Mammary epithelial cell (primary cell): ENCODE measurements at regions of chr19 and their contacts with region 1.

Region 1: DNA sequence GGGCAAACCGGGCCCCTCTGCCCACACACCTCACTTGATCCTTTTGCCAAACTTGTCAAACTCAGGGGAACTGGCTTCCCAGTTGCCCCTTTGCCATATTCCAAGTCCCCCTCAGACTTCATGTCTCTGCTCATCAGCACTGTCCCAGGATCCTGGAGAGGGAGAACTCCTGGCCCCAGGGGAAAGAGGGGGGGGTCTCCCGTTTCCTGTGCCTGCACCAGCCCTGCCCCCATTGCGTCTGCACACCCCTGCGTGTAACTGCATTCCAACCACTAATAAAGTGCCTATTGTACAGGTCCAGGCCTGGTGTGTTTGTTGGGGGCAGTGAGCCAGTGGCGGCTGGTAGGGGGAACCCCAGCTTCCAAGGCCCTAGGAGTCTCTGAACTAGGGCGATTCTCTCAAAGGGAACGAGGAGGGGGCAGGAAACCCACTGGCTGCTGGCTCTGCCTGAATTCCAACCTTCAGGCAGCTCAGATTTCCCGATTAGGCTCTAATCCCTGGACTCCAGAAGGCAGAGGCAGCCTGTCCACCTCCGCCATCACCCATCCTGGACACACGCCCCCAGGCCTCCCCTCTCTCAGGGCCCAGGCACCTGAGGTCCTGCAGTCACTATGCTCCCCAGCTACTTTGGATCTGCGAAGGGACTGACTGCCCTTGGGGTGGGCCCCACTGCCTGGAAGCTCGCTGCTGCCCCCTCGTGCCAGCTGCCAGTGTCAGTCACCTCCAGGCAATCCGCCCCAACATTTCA is 9.7 kb upstream of the ILF3 start:
- DNase-seq: peak; percentile 59
- H3K4me3 ChIP-seq: no peak overlapping the region
- H3K27ac ChIP-seq: no peak overlapping the region
- H3K4me1 ChIP-seq: peaks cover 14% of the 10 kb centered on the region
- H3K27me3 ChIP-seq: no peaks in the 10 kb centered on the region
- CTCF ChIP-seq: peak; percentile 81 to 91

Region 2: DNA sequence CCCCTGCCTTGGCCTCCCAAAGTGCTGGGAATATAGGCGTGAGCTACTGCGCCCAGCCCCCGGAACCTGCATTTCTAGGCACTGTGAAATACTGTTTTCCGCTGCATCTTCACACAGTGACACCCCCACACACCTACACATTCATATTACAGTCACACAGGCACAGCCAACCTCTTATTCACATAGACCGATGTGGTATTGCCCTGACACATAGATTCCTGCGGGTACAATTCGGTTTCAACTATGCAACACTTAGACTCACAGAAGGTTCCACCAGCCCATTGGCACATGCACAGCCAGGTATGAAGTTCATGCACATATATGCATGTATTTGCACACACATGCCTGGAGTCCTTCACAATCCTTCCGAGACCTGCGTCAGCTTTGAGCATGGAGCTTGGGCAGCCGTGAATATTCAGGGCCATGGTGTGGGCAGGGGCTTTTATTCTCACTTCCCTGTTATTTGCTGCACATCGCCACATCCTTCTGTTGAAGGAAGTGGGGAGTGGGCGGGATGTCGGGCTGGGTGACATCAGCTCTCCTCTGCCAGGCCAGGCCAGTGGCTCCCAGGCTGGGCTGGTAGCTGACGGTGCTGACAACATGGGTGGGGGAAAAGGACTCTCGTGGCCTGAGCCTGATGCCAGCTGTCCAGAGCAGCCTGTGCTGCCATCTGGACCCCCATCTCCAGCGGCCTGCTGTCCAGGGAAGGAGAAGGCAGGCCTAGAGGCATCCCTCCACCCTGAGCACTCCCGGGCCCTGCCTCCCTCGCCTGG is 235.7 kb before region 1 on chr19:
- CTCF ChIA-PET with region 1: interaction called, 27 read pairs
- dilution Hi-C with region 1: no loop called
- in situ Hi-C with region 1: no loop called
- intact Hi-C with region 1: no loop called
- DNase-seq: no peak
- H3K4me3 ChIP-seq: no peak overlapping the region
- H3K27ac ChIP-seq: no peak overlapping the region
- H3K4me1 ChIP-seq: peaks cover 13% of the 10 kb centered on the region
- H3K27me3 ChIP-seq: peaks cover 5% of the 10 kb centered on the region
- CTCF ChIP-seq: no peak

Region 3: DNA sequence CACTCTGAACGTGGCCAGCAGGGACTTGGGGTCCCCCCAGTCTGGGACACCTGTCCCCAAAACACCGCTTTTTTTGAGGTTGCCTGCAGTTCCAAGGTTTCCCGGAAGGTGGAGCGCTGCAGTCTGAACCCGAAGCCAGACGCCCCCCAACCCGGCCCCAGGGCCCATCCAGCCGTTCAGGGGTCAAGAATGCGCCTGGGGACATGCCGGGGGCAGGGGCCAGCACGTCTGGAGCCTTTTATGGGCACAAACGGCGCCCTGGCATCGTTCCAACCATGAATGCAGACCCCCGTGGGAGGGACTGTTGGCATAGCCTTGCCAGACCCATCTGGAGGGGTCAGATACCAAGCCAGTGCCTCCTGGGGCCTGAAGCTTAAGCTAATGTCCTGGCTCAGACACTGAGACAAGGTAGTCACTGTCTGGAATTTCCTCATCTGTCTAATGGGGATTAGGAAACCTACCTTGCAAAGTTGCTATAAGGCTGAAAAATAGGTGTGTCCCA is 134.1 kb before region 1 on chr19:
- CTCF ChIA-PET with region 1: no interaction called
- dilution Hi-C with region 1: loop called (anchors 5 kb)
- in situ Hi-C with region 1: no loop called
- intact Hi-C with region 1: no loop called
- DNase-seq: peak; percentile 72
- H3K4me3 ChIP-seq: no peak overlapping the region
- H3K27ac ChIP-seq: no peak overlapping the region
- H3K4me1 ChIP-seq: peaks cover 14% of the 10 kb centered on the region
- H3K27me3 ChIP-seq: no peaks in the 10 kb centered on the region
- CTCF ChIP-seq: peak; percentile 46 to 73

Region 4: DNA sequence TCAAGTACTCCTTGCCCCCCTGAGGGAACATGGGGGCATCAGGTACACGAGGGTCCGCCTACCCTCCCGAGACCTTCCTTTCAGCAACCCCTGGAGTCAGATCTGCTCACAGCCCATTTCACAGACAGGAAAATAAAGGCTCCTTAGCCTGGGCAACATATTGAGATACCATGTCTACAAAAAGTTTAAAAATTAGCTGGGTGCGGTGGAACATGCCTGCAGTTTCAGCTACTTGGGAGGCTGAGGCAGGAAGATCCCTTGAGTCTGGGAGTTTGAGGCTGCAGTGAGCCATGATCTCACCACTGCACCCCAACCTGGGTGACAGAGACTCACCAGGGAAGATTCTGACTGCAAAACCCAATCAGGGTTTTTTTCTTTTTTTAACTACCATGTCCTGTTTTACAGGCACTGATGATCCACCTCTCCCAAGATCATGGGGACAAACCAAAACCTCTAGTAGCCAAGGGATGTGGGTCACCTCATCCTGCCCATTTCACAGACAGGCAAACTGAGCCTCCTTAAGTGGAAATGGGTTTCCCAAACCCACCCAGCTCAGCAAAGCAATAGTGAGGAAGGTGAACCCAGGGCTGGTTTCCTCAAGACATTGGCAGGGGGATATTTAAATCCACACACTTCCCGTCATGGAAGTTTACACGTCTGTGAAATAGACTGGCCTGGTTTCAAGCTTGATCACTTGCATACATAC is 69.3 kb before region 1 on chr19:
- CTCF ChIA-PET with region 1: interaction called, 16 read pairs
- dilution Hi-C with region 1: loop called (anchors 5 kb)
- in situ Hi-C with region 1: loop called (anchors 5 kb)
- intact Hi-C with region 1: no loop called
- DNase-seq: no peak
- H3K4me3 ChIP-seq: no peak overlapping the region
- H3K27ac ChIP-seq: no peak overlapping the region
- H3K4me1 ChIP-seq: no peaks in the 10 kb centered on the region
- H3K27me3 ChIP-seq: no peaks in the 10 kb centered on the region
- CTCF ChIP-seq: no peak

Region 5: GRCh38 chr19:10580979-10581631 is 63.3 kb before region 1 on chr19:
- CTCF ChIA-PET with region 1: interaction called, 17 read pairs
- dilution Hi-C with region 1: loop called (anchors 5 kb)
- in situ Hi-C with region 1: loop called (anchors 5 kb)
- intact Hi-C with region 1: loop called (anchors 1 kb)
- DNase-seq: peak; percentile 73
- H3K4me3 ChIP-seq: no peak overlapping the region
- H3K27ac ChIP-seq: no peak overlapping the region
- H3K4me1 ChIP-seq: no peaks in the 10 kb centered on the region
- H3K27me3 ChIP-seq: no peaks in the 10 kb centered on the region
- CTCF ChIP-seq: peak; percentile 98 to 99

Region 6: GRCh38 chr19:10612491-10613119 is 31.8 kb before region 1 on chr19:
- CTCF ChIA-PET with region 1: no interaction called
- dilution Hi-C with region 1: loop called (anchors 5 kb)
- in situ Hi-C with region 1: no loop called
- intact Hi-C with region 1: no loop called
- DNase-seq: no peak
- H3K4me3 ChIP-seq: no peak overlapping the region
- H3K27ac ChIP-seq: no peak overlapping the region
- H3K4me1 ChIP-seq: peaks cover 12% of the 10 kb centered on the region
- H3K27me3 ChIP-seq: no peaks in the 10 kb centered on the region
- CTCF ChIP-seq: no peak